Activated CD4-positive, alpha-beta T cell treated with anti-CD3 and anti-CD28 coated beads for 36 hours (primary cell): ENCODE measurements at regions of chr20 and their contacts with region 1.

Region 1: GRCh38 chr20:47886460-47887041 is 101.3 kb upstream of the SULF2 start:
- DNase-seq: no peak
- ATAC-seq: no peak
- H3K4me3 Mint-ChIP-seq: no peak overlapping the region
- H3K27ac Mint-ChIP-seq: no peak overlapping the region
- H3K4me1 Mint-ChIP-seq: no peaks in the 10 kb centered on the region
- H3K27me3 Mint-ChIP-seq: no peaks in the 10 kb centered on the region

Region 2: GRCh38 chr20:47725248-47725973 is 161.1 kb before region 1 on chr20:
- CTCF ChIA-PET with region 1: no interaction called
- POLR2A ChIA-PET with region 1: no interaction called
- intact Hi-C with region 1: loop called in 1 of 2 experiments (anchors 10 kb)
- DNase-seq: peak; percentile 90
- ATAC-seq: peak; percentile 72
- H3K4me3 Mint-ChIP-seq: no peak overlapping the region
- H3K27ac Mint-ChIP-seq: peak overlapping the region; percentile 63
- H3K4me1 Mint-ChIP-seq: peaks cover 29% of the 10 kb centered on the region
- H3K27me3 Mint-ChIP-seq: no peaks in the 10 kb centered on the region

Region 3: DNA sequence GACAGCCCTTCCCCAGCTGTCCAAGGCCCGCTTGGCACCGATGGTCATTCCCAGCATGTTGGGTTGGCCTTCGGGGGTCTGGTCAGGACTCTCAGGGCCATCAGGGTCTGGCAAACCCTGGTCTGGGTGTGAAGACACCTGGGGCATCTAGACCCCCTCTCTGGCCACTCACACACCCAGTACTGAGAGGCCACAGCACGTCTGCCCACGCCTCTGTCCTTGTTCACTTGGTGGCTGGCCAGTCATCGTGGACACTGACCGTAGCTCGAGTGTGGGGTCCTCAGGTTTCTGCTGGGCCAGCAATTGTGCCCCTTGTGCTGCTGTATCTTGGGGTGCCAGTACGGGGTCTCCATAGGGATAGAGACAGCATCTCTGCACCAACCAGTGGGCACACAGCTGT is 47.4 kb before region 1 on chr20:
- CTCF ChIA-PET with region 1: no interaction called
- POLR2A ChIA-PET with region 1: no interaction called
- intact Hi-C with region 1: loop called (anchors 5 to 10 kb)
- DNase-seq: no peak
- ATAC-seq: no peak
- H3K4me3 Mint-ChIP-seq: no peak overlapping the region
- H3K27ac Mint-ChIP-seq: no peak overlapping the region
- H3K4me1 Mint-ChIP-seq: no peaks in the 10 kb centered on the region
- H3K27me3 Mint-ChIP-seq: no peaks in the 10 kb centered on the region

Region 4: DNA sequence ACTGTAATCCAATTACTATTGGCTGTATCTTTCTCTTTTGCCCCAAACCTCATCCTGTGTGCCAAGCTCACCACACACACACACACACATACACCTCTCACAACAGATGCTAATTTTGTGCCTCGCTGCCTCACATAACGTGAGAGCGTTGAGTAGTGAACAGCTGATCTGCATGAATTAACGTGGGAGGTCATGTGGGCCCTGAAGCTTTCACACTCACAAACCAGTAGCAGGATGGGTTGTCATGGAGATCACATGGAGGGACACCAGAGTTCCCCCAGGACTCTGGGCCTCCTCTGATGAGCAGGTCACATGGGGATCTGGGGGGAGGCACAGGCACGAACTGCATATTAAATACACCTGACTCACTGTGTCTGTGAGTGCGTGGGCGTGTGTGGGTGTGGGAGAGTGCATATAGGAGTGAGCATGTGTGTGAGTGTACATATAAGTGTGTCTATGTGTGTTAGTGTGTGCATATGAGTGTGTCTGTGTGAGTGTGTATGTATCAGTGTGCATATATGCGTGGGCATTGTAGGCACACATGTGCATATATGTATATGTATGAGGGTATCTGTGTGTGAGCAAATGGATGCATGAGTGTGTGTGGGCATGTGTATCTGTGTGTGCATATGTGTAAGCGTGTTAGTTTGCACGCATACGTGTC is 38.6 kb before region 1 on chr20:
- CTCF ChIA-PET with region 1: interaction called, 3 read pairs
- POLR2A ChIA-PET with region 1: no interaction called
- intact Hi-C with region 1: loop called in 1 of 2 experiments (anchors 10 kb)
- DNase-seq: no peak
- ATAC-seq: no peak
- H3K4me3 Mint-ChIP-seq: no peak overlapping the region
- H3K27ac Mint-ChIP-seq: no peak overlapping the region
- H3K4me1 Mint-ChIP-seq: no peaks in the 10 kb centered on the region
- H3K27me3 Mint-ChIP-seq: peaks cover 9% of the 10 kb centered on the region

Region 5: DNA sequence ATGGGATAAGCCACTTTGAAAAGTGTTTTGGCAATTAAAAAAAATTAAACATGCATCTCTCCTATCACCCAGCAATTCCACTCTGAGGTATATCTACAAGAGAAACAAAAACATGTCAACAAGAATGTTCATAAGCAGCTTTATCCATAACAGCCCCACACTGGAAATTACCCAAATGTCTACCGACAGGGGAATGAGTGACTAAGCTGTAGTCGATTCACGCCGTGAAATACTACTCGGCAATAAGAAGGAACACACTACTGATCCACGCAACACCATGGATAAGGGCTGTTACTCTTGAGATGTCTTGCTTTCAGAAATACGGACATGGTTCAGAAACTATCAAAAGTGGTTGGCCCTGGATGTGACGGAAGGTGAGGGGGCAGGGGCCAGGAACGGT is 46.5 kb after region 1 on chr20:
- CTCF ChIA-PET with region 1: no interaction called
- POLR2A ChIA-PET with region 1: no interaction called
- intact Hi-C with region 1: no loop called
- DNase-seq: no peak
- ATAC-seq: no peak
- H3K4me3 Mint-ChIP-seq: no peak overlapping the region
- H3K27ac Mint-ChIP-seq: no peak overlapping the region
- H3K4me1 Mint-ChIP-seq: no peaks in the 10 kb centered on the region
- H3K27me3 Mint-ChIP-seq: peaks cover 2% of the 10 kb centered on the region

Region 6: GRCh38 chr20:47973519-47974233 is 87.1 kb after region 1 on chr20:
- CTCF ChIA-PET with region 1: no interaction called
- POLR2A ChIA-PET with region 1: no interaction called
- intact Hi-C with region 1: no loop called
- DNase-seq: no peak
- ATAC-seq: no peak
- H3K4me3 Mint-ChIP-seq: no peak overlapping the region
- H3K27ac Mint-ChIP-seq: no peak overlapping the region
- H3K4me1 Mint-ChIP-seq: peaks cover 7% of the 10 kb centered on the region
- H3K27me3 Mint-ChIP-seq: peaks cover 13% of the 10 kb centered on the region